ENCODE measurements at regions of chr20 and their contacts with region 1.

Region 1: GRCh38 chr20:44074252-44075151 is 112.5 kb downstream of the JPH2 start:
- DNase-seq: peak; percentile 14 to 46
- H3K4me3 ChIP-seq: no peak overlapping the region
- H3K27ac ChIP-seq: no peak overlapping the region
- H3K4me1 ChIP-seq: no peaks in the 10 kb centered on the region
- H3K27me3 ChIP-seq: peaks cover 0 to 18% of the 10 kb centered on the region in 2 donors
- CTCF ChIP-seq: no peak
- POLR2A ChIP-seq: no peak

Region 2: DNA sequence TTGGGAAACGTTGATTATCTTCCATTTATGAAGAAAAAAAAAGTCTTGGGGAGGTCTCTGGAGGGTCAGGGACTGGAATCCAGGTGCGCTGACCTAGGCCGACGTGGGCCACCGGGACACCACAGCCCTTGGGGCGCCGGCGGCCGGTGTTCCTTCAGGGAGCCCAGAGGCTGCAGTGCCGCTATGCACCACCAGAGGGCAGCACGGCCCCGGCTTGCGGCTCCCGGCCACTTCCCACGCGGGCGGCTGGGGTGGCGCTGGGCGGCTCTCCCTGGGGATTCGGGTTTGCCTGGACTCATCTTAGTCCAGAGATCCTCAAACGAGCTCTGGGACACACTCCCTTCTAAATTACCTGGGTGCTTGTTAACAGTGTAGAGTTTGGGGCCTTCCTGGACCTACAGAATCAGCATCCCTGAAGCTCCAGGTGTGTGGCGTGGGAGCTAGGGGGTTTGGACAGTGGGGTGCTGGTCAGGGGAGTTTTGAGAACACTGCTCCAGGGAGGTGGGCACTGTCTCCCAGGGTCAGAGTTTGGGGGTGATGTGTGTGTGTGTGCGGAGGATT is 324.7 kb before region 1 on chr20:
- intact Hi-C with region 1: loop called (anchors 5 kb)
- DNase-seq: peak; percentile 46 to 70
- H3K4me3 ChIP-seq: no peak overlapping the region
- H3K27ac ChIP-seq: no peak overlapping the region
- H3K4me1 ChIP-seq: no peaks in the 10 kb centered on the region
- H3K27me3 ChIP-seq: peaks cover 0 to 10% of the 10 kb centered on the region in 2 donors
- CTCF ChIP-seq: peak; percentile 67 to 90 (median 90)
- POLR2A ChIP-seq: no peak